ENCODE measurements at regions of chr2 and their contacts with region 1.

Region 1: GRCh38 chr2:222483513-222484039 is 59.2 kb downstream of the SGPP2 start:
- DNase-seq: peak in 1 of 2 experiments; percentile 26
- H3K4me3 ChIP-seq: no peak overlapping the region
- H3K27ac ChIP-seq: no peak overlapping the region
- H3K4me1 ChIP-seq: no peaks in the 10 kb centered on the region
- H3K27me3 ChIP-seq: no peaks in the 10 kb centered on the region
- CTCF ChIP-seq: peak; percentile 35

Region 2: DNA sequence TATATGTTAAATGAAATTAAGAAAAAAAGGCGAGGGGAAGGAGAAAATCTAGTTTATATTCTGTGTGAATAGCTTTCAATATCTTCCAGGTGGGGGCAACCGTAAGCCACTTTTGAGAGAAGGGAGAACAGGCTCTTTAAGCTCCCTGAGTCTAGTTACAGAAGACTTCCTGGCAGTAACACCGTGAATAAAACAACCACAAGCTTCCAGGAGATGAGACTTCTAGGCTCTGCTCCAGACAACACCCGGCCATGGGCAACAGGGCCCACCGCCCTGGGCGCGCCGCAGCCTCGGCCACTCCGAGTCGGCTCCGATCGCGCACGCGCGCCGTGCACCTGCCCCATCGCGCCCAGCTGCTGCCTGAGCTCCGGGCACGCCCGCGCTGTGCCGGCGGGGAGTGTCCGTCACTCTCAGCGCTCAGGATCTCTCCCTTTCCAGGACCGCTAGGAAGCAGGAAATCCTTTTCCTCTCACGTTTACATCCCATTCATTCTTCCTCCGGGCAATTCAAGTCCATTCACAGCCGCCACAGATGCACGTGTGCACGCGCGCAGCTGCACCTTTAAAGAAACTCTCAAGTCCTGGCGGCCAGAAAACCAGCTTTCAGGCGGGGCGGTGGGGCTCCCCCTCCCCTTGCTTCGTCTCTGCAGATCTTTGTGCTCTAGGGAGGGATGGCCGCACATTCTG is 165.4 kb before region 1 on chr2:
- CTCF ChIA-PET with region 1: interaction called, 9 read pairs
- POLR2A ChIA-PET with region 1: no interaction called
- intact Hi-C with region 1: loop called (anchors 1 kb)
- DNase-seq: peak; percentile 74 to 89
- H3K4me3 ChIP-seq: peak overlapping the region; percentile 79
- H3K27ac ChIP-seq: no peak overlapping the region
- H3K4me1 ChIP-seq: peaks cover 5% of the 10 kb centered on the region; the same call in 1 of the 2 replicates
- H3K27me3 ChIP-seq: peaks cover 13% of the 10 kb centered on the region; the same call in 1 of the 2 replicates
- CTCF ChIP-seq: peak; percentile 87

Region 3: DNA sequence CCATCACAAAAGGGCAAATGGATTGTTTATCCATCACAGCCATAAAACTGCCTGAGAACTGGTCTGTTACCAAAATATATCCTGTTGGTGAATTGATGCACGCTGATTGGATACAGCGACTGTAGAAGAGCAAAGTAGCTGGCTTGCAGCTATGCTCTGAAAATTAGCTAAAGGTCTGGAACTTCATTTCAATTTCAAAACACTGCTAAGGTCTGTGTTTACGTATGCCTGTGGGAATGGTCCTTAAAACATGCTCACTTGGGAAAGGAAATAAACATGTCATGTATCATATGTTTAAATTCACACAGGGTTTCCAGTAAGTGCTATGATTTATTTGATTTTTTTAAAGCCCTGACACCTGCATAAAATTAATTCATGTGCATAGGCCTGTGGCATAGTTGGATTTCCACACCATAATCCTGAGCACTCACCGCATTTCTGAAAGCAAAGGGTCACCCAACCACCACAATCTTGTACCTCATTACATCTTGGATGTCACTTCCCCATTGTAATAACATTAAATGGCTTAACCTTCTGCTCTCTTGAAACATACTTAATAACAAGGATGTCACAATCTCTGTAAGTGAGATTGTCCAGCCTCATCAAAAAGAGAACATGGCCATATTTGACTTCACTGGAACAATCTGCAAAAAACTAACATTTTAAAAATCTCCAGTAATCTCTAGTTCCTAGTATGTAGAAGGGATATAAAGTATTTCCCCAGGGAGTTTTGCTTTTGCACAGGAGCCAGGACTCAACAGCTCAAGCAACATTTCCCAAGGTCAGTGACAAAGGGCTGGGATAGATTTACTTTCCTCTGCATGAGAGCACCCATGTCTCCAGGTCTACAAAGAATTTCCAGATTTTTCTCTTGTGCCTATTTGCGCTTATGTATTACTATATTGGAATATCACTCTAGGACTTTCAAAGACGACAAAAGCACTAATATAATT is 62.5 kb after region 1 on chr2:
- CTCF ChIA-PET with region 1: no interaction called
- POLR2A ChIA-PET with region 1: no interaction called
- intact Hi-C with region 1: no loop called
- DNase-seq: no peak
- H3K4me3 ChIP-seq: no peak overlapping the region
- H3K27ac ChIP-seq: no peak overlapping the region
- H3K4me1 ChIP-seq: no peaks in the 10 kb centered on the region
- H3K27me3 ChIP-seq: no peaks in the 10 kb centered on the region
- CTCF ChIP-seq: no peak